ENCODE measurements at regions of chr12 and their contacts with region 1.

Region 1: GRCh38 chr12:76763743-76764675 is at the start of gene ZDHHC17:
- DNase-seq: peak; percentile 91
- H3K4me3 Mint-ChIP-seq: peak within 1 kb of the TSS; percentile 98
- H3K27ac Mint-ChIP-seq: peak within 1 kb of the TSS; percentile 94
- H3K4me1 Mint-ChIP-seq: peaks cover 19% of the 10 kb centered on the region
- H3K27me3 Mint-ChIP-seq: peaks cover 3% of the 10 kb centered on the region
- total RNA-seq, gene ZDHHC17: 23.3 and 32.3 TPM in 2 replicates

Region 2: DNA sequence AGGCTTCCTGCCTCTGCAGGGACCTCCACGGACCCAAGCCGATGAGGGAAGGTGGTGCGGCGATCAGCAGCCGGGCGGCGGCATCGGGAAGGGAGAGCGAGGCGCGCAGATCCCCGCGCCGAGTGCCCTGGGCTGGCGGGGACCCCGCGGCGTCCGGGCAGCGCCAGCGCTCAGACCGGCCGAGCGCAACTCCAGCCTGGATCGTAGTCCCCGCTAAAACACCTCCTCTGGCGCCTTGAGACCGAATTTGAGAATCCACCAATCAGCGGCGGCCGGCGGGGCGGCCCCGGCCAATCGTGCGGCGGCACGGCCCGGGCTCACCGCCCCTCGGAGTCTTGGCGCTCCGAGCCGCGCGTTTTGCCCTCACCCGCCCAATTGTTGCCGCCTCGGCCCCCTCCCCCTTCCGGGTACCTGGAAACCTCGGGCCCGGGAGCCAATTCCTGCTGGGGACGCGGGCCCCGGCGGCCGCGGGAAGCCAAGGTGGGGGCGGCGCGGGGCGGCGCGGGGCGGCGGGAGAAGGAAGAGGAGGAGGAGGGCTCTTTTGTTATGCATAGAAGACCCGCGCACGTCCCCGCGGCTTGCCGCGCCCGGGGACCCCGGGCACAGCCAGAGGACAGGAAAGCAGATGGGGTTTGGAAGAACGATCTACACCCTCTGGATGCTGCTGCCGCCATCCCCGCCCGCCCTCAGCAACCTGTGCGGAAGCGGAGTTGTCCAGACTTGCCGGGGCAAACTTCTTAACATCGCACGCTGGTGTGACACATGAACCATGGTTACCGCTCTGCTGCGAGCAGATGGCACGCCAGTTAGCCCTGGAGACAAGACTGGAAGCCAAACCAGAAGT is 301.6 kb after region 1 on chr12 and contains the start of gene E2F7:
- intact Hi-C with region 1: loop called (anchors 5 kb)
- DNase-seq: peak; percentile 87
- H3K4me3 Mint-ChIP-seq: peak within 1 kb of the TSS; percentile 94
- H3K27ac Mint-ChIP-seq: peak within 1 kb of the TSS; percentile 73
- H3K4me1 Mint-ChIP-seq: peaks cover 42% of the 10 kb centered on the region
- H3K27me3 Mint-ChIP-seq: peaks cover 12% of the 10 kb centered on the region
- total RNA-seq, gene E2F7: 16.6 and 16.9 TPM in 2 replicates